A549 (cell line): ENCODE measurements at regions of chr4 and their contacts with region 1.

Region 1: DNA sequence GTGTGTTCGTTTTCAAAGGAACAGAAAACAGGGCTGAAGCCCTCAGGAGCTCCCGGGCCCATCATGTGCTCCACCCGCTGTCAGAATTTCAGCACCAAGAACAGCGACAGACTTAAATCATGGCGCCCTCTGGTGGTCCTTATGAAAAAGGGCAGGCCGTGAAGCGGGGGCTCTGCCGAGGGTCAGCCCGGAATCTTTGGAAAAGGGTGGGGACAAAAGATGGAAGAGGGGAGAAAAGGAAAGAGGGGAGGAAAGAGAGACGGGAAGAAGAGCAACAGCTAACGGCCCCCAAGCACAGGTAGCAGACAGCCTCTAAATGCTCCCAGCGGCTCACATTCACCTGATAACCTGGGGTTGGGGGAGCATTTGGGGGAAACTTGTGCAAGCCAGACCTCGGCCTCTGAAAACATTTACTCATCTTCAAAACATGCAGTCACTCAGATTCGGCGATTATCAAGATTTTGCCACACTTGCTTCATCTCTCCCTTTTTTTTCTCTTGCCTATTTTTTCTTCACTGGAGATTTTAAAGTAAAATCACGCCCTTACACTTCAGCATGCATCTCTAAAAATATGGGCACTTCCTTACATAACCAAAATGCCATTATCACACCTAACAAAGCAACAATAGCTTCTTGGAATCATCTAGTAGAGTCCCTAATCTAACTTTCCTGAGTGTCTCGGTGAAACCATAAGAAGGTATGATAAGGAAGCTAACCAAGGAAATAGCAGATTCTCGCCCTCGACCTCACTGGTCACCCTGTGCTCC is 28.1 kb upstream of the MAN2B2 start:
- DNase-seq: peak; percentile 20 to 75
- ATAC-seq: peak in 1 of 2 experiments; percentile 78; a peak in 4 of 6 replicates
- H3K4me3 ChIP-seq: no peak overlapping the region
- H3K27ac ChIP-seq: no peak overlapping the region
- H3K4me1 ChIP-seq: no peaks in the 10 kb centered on the region
- CTCF ChIP-seq: peak; percentile 68
- EP300 ChIP-seq: no peak
- POLR2A ChIP-seq: no peak
- RAD21 ChIP-seq: peak; percentile 59 to 63

Region 2: GRCh38 chr4:6367371-6367851 is 179.5 kb before region 1 on chr4:
- CTCF ChIA-PET with region 1: no interaction called
- POLR2A ChIA-PET with region 1: no interaction called
- DNase-seq: no peak
- ATAC-seq: no peak
- H3K4me3 ChIP-seq: no peak overlapping the region
- H3K27ac ChIP-seq: no peak overlapping the region
- H3K4me1 ChIP-seq: no peaks in the 10 kb centered on the region
- CTCF ChIP-seq: no peak
- EP300 ChIP-seq: no peak
- POLR2A ChIP-seq: no peak
- RAD21 ChIP-seq: no peak

Region 3: GRCh38 chr4:6416518-6417286 is 130.2 kb before region 1 on chr4:
- CTCF ChIA-PET with region 1: no interaction called
- POLR2A ChIA-PET with region 1: no interaction called
- DNase-seq: no peak
- ATAC-seq: no peak
- H3K4me3 ChIP-seq: no peak overlapping the region
- H3K27ac ChIP-seq: no peak overlapping the region
- H3K4me1 ChIP-seq: 0 out of 3 replicates have a peak, but pooled peaks cover 5% of the 10 kb centered on the region
- CTCF ChIP-seq: no peak
- EP300 ChIP-seq: no peak
- POLR2A ChIP-seq: no peak
- RAD21 ChIP-seq: no peak

Region 4: GRCh38 chr4:6474107-6474511 is 72.8 kb before region 1 on chr4:
- CTCF ChIA-PET with region 1: interaction called, 28 read pairs
- POLR2A ChIA-PET with region 1: no interaction called
- DNase-seq: peak; percentile 50 to 56
- ATAC-seq: peak in 1 of 2 experiments; percentile 53; a peak in 3 of 6 replicates
- H3K4me3 ChIP-seq: no peak overlapping the region
- H3K27ac ChIP-seq: no peak overlapping the region
- H3K4me1 ChIP-seq: peaks cover 10% of the 10 kb centered on the region; the same call in 1 of the 3 replicates
- CTCF ChIP-seq: peak; percentile 22; the same call in 2 of the 3 replicates
- EP300 ChIP-seq: no peak
- POLR2A ChIP-seq: no peak
- RAD21 ChIP-seq: peak in 1 of 2 experiments; percentile 35; a peak in 1 of 5 replicates

Region 5: GRCh38 chr4:6529021-6529420 is 17.8 kb before region 1 on chr4:
- CTCF ChIA-PET with region 1: interaction called, 34 read pairs
- POLR2A ChIA-PET with region 1: no interaction called
- DNase-seq: no peak
- ATAC-seq: no peak
- H3K4me3 ChIP-seq: no peak overlapping the region
- H3K27ac ChIP-seq: no peak overlapping the region
- H3K4me1 ChIP-seq: no peaks in the 10 kb centered on the region
- CTCF ChIP-seq: no peak
- EP300 ChIP-seq: no peak
- POLR2A ChIP-seq: no peak
- RAD21 ChIP-seq: no peak

Region 6: DNA sequence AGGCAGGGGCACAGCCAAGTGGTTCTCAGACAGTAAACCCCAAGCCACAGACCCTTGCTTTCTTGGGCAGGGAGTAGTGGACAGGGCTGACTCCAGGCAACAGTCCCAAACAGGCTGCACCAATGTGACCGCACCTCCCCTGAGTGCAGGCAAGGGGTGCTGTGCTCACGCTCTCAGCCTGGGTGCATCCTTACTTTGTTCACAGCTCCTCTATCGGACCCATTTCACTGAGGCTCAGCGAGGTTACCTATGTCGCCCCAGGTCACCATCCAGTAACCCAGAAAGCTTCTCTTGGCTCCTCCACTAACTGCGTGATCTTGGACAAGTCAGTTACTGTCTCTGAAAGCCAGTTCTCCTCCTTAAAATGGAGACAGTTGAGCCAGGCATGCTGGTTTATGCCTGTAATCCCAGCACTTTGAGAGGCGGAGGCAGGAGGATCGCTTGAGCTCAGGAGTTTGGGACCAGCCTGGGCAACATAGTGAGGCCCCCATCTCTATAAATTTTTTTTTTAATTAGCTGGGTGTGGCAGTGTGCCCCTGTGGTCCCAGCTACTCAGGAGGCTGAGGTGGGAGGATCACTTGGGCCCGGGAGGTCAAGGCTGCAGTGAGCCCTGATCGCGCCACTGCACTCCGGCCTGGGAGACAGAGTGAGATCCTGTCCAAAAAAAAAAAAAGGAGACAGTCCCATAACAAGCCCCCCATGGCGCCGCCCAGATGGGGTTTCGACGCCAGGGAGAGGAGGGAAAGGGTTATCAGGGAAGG is 27.3 kb after region 1 on chr4:
- CTCF ChIA-PET with region 1: interaction called, 16 read pairs
- POLR2A ChIA-PET with region 1: interaction called, 3 read pairs
- DNase-seq: no peak
- ATAC-seq: peak in 1 of 2 experiments; percentile 21; a peak in 1 of 6 replicates
- H3K4me3 ChIP-seq: peak overlapping the region; percentile 75
- H3K27ac ChIP-seq: peak overlapping the region; percentile 83 to 91
- H3K4me1 ChIP-seq: peaks cover 5% of the 10 kb centered on the region; the same call in 1 of the 3 replicates
- CTCF ChIP-seq: no peak
- EP300 ChIP-seq: no peak
- POLR2A ChIP-seq: no peak
- RAD21 ChIP-seq: no peak

Region 7: DNA sequence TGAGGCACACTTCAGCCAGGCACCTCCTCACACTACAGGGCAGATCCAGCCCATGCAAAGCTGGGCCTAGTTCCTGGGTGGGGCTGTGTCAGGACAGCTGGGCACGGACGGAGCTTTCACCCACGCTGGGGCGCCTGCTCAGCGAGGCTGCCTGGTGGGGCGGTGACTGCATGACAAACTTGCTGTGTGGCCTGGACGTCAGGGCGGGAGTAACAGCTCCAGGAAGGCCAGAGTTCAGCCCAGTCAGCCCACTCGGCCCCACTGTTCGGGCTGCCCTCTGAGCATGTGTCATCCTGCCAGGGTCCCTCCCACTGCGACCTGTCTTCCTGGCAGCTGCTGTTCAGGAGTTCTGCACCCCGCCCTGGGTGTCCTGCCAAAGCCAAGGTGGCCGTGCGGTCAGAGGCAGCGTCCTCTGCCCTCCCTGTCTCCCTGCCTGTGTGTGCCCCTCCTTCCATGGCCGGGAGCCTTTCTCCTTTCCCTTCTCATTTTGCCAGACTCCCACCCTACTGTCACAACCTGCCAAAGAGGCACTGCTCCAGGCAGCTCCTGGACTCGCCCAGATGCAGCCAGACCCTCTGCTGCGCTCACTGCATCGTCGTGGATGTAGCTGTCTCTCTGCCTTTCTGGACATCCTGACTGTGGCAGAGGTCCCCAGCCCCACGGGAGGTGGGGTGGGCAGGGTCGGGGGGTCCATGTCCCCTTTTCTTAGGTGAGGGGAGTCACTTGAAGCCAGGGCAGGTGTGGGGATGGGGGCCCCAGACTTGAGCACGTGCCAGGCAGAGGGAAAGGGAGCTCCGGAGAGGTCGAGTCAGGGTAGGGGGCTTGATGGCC is 202.7 kb after region 1 on chr4:
- CTCF ChIA-PET with region 1: no interaction called
- POLR2A ChIA-PET with region 1: no interaction called
- DNase-seq: peak; percentile 65 to 82
- ATAC-seq: peak; percentile 67 to 74; a peak in 5 of 6 replicates
- H3K4me3 ChIP-seq: no peak overlapping the region
- H3K27ac ChIP-seq: peak overlapping the region; percentile 82 to 85
- H3K4me1 ChIP-seq: peaks cover 56% of the 10 kb centered on the region
- CTCF ChIP-seq: no peak
- EP300 ChIP-seq: no peak
- POLR2A ChIP-seq: peak; percentile 14; the same call in 1 of the 2 replicates
- RAD21 ChIP-seq: no peak